Activated B cell treated with CpG ODN at 0.5 μM for 24 hours (primary cell): ENCODE measurements at regions of chr15 and their contacts with region 1.

Region 1: GRCh38 chr15:75801859-75802593 is 41.2 kb upstream of the UBE2Q2 start:
- DNase-seq: peak; percentile 63
- ATAC-seq: peak; percentile 100
- H3K4me3 Mint-ChIP-seq: peak overlapping the region; percentile 36
- H3K27ac Mint-ChIP-seq: no peak overlapping the region
- H3K4me1 Mint-ChIP-seq: peaks cover 4% of the 10 kb centered on the region
- H3K27me3 Mint-ChIP-seq: peaks cover 45% of the 10 kb centered on the region
- CTCF ChIP-seq: peak; percentile 55

Region 2: GRCh38 chr15:75508840-75509532 is 293.0 kb before region 1 on chr15:
- CTCF ChIA-PET with region 1: interaction called, 4 read pairs
- POLR2A ChIA-PET with region 1: no interaction called
- intact Hi-C with region 1: loop called (anchors 1 kb)
- DNase-seq: no peak
- ATAC-seq: no peak
- H3K4me3 Mint-ChIP-seq: no peak overlapping the region
- H3K27ac Mint-ChIP-seq: no peak overlapping the region
- H3K4me1 Mint-ChIP-seq: no peaks in the 10 kb centered on the region
- H3K27me3 Mint-ChIP-seq: no peaks in the 10 kb centered on the region
- CTCF ChIP-seq: no peak

Region 3: DNA sequence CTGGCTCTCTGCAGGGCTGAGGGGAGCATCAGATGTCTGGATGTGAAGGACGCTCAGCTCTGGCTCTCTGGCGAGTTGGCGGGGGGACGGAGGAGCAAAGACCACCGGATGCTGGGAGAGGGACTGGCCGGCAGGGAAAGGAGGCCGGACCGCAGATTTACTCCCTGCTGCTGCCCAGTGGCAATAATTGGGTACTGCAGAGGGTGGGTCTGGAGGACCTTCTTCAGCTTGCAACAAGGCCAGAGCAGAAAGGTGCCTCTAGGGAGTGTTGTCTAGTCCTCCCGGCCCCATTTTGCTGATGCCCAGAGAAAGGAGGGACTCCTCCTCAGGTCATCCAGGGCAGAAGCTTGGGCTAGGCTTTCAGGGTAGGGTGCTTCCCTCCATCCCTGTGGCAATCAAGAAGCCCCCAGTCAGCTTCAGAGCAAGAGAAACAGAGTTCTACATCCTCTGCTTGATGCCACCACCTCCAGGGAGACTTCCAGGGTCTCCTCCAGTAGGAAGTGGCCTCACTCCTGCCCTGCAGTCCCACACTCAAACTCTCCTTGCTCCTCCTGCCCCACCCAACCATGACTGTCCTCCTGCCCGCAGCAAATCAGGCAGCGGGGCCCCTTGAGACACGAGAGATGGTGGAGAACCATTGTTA is 69.1 kb before region 1 on chr15:
- CTCF ChIA-PET with region 1: interaction called, 25 read pairs
- POLR2A ChIA-PET with region 1: no interaction called
- intact Hi-C with region 1: loop called (anchors 1 kb)
- DNase-seq: peak; percentile 48
- ATAC-seq: peak; percentile 78
- H3K4me3 Mint-ChIP-seq: no peak overlapping the region
- H3K27ac Mint-ChIP-seq: no peak overlapping the region
- H3K4me1 Mint-ChIP-seq: peaks cover 19% of the 10 kb centered on the region
- H3K27me3 Mint-ChIP-seq: peaks cover 9% of the 10 kb centered on the region
- CTCF ChIP-seq: no peak

Region 4: DNA sequence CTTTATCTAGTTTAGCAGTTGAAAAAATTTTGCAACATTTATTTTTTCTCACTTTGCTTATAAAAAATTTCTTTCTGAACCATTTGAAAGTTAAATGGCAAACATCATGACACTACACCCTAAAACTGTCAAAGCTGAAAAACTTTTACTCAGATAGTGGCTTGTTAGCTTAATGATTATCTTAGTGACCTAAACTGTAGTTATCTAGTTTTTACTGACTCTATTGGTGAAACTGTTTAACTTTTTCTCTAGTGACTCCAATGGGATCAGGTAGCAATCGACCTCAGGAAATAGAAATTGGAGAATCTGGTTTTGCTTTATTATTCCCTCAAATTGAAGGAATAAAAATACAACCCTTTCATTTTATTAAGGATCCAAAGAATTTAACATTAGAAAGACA is 115.0 kb after region 1 on chr15:
- CTCF ChIA-PET with region 1: no interaction called
- POLR2A ChIA-PET with region 1: no interaction called
- intact Hi-C with region 1: no loop called
- DNase-seq: no peak
- ATAC-seq: no peak
- H3K4me3 Mint-ChIP-seq: no peak overlapping the region
- H3K27ac Mint-ChIP-seq: no peak overlapping the region
- H3K4me1 Mint-ChIP-seq: no peaks in the 10 kb centered on the region
- H3K27me3 Mint-ChIP-seq: no peaks in the 10 kb centered on the region
- CTCF ChIP-seq: no peak

Region 5: GRCh38 chr15:76118051-76118450 is 316.0 kb after region 1 on chr15:
- CTCF ChIA-PET with region 1: no interaction called
- POLR2A ChIA-PET with region 1: no interaction called
- intact Hi-C with region 1: no loop called
- DNase-seq: no peak
- ATAC-seq: no peak
- H3K4me3 Mint-ChIP-seq: no peak overlapping the region
- H3K27ac Mint-ChIP-seq: no peak overlapping the region
- H3K4me1 Mint-ChIP-seq: no peaks in the 10 kb centered on the region
- H3K27me3 Mint-ChIP-seq: peaks cover 13% of the 10 kb centered on the region
- CTCF ChIP-seq: no peak

Region 6: DNA sequence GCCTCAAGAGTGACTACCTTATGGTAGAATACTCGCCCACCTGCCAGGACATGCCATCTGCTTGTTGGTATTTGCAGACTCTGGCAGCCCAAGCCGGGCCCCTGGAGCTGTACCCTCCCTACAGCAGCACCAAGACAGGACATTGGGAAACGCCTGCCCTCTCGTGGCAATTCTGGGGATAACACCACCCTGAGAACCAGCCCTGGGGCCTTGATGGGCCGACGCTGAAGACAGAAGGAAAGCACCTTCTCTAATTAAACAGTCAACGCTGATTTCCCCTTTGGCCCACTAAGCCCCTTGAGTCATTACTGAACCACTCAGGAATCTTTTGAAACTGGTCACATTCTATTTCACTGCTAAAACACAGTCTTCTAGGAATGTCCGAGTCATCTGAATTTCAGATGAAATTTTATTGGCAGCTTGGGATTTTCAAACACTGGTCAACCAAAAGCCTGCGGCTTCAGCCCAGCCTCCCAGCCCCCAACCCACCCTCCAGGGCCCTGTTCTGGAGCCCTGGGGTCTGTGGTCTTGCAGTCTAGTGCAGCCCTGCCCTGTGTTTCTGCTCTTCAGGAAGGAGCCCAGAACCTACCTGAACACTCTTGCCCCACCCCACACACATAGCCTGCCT is 349.1 kb after region 1 on chr15:
- CTCF ChIA-PET with region 1: no interaction called
- POLR2A ChIA-PET with region 1: no interaction called
- intact Hi-C with region 1: loop called (anchors 5 kb)
- DNase-seq: peak; percentile 75
- ATAC-seq: peak; percentile 95
- H3K4me3 Mint-ChIP-seq: no peak overlapping the region
- H3K27ac Mint-ChIP-seq: peak overlapping the region; percentile 41
- H3K4me1 Mint-ChIP-seq: peaks cover 18% of the 10 kb centered on the region
- H3K27me3 Mint-ChIP-seq: peaks cover 6% of the 10 kb centered on the region
- CTCF ChIP-seq: peak; percentile 41